ENCODE measurements at regions of chr3 and their contacts with region 1.

Region 1: GRCh38 chr3:197599089-197599765 is 43.5 kb upstream of the BDH1 start:
- DNase-seq: peak; percentile 85
- H3K4me3 Mint-ChIP-seq: no peak overlapping the region
- H3K27ac Mint-ChIP-seq: no peak overlapping the region
- H3K4me1 Mint-ChIP-seq: no peaks in the 10 kb centered on the region
- H3K27me3 Mint-ChIP-seq: no peaks in the 10 kb centered on the region

Region 2: GRCh38 chr3:197270558-197271317 is 328.5 kb before region 1 on chr3:
- CTCF ChIA-PET with region 1: no interaction called
- POLR2A ChIA-PET with region 1: no interaction called
- intact Hi-C with region 1: no loop called
- DNase-seq: no peak
- H3K4me3 Mint-ChIP-seq: no peak overlapping the region
- H3K27ac Mint-ChIP-seq: no peak overlapping the region
- H3K4me1 Mint-ChIP-seq: peaks cover 43% of the 10 kb centered on the region
- H3K27me3 Mint-ChIP-seq: no peaks in the 10 kb centered on the region

Region 3: DNA sequence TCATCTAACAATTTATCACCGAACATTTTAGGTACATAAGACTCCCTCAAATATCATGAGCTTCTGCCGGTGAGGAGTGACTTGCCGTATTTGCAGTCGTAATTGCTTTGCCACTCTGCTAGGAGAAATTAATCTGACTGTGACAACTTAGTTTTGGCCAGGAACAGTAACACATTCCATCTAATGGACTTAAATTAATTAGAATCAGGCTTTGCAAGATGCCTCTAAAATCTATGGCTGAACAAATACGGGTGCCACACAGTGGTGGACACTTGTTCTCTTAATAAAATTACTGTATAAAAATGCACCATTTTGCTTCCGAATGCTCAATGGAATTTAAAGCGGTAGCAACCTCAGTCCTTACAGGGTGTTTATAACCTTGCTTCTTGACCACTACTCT is 15.9 kb before region 1 on chr3:
- CTCF ChIA-PET with region 1: interaction called, 22 read pairs
- POLR2A ChIA-PET with region 1: no interaction called
- intact Hi-C with region 1: no loop called
- DNase-seq: no peak
- H3K4me3 Mint-ChIP-seq: no peak overlapping the region
- H3K27ac Mint-ChIP-seq: no peak overlapping the region
- H3K4me1 Mint-ChIP-seq: no peaks in the 10 kb centered on the region
- H3K27me3 Mint-ChIP-seq: no peaks in the 10 kb centered on the region

Region 4: DNA sequence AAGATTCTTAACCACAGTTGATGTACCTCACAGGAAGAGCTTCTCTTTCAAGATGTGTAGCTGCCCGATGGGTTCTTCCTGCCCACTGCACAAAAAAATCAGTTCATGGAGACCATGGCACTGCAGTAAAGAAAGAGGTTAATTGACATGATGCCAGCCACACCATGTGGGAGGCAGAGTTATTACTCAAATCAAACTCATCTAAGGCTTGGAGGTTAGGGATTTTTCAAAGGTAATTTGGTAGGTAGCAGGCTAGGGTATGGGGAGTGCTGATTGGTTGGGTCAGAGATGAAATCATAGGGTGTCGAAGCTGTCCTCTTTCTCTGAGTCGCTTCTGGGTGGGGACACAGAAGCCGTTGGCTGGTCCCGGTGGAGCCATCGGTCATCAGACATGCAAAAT is 14.0 kb after region 1 on chr3:
- CTCF ChIA-PET with region 1: interaction called, 81 read pairs
- POLR2A ChIA-PET with region 1: no interaction called
- intact Hi-C with region 1: no loop called
- DNase-seq: peak; percentile 73
- H3K4me3 Mint-ChIP-seq: peak overlapping the region; percentile 5
- H3K27ac Mint-ChIP-seq: peak overlapping the region; percentile 80
- H3K4me1 Mint-ChIP-seq: peaks cover 21% of the 10 kb centered on the region
- H3K27me3 Mint-ChIP-seq: no peaks in the 10 kb centered on the region

Region 5: GRCh38 chr3:197667978-197668377 is 68.8 kb after region 1 on chr3:
- CTCF ChIA-PET with region 1: interaction called, 41 read pairs
- POLR2A ChIA-PET with region 1: no interaction called
- intact Hi-C with region 1: loop called (anchors 5 kb)
- DNase-seq: no peak
- H3K4me3 Mint-ChIP-seq: no peak overlapping the region
- H3K27ac Mint-ChIP-seq: no peak overlapping the region
- H3K4me1 Mint-ChIP-seq: no peaks in the 10 kb centered on the region
- H3K27me3 Mint-ChIP-seq: no peaks in the 10 kb centered on the region

Measured in activated CD4-positive, alpha-beta memory T cell treated with anti-CD3 and anti-CD28 coated beads for 36 hours (primary cell).